Endothelial cell of umbilical vein (primary cell): ENCODE measurements at regions of chr11 and their contacts with region 1.

Region 1: DNA sequence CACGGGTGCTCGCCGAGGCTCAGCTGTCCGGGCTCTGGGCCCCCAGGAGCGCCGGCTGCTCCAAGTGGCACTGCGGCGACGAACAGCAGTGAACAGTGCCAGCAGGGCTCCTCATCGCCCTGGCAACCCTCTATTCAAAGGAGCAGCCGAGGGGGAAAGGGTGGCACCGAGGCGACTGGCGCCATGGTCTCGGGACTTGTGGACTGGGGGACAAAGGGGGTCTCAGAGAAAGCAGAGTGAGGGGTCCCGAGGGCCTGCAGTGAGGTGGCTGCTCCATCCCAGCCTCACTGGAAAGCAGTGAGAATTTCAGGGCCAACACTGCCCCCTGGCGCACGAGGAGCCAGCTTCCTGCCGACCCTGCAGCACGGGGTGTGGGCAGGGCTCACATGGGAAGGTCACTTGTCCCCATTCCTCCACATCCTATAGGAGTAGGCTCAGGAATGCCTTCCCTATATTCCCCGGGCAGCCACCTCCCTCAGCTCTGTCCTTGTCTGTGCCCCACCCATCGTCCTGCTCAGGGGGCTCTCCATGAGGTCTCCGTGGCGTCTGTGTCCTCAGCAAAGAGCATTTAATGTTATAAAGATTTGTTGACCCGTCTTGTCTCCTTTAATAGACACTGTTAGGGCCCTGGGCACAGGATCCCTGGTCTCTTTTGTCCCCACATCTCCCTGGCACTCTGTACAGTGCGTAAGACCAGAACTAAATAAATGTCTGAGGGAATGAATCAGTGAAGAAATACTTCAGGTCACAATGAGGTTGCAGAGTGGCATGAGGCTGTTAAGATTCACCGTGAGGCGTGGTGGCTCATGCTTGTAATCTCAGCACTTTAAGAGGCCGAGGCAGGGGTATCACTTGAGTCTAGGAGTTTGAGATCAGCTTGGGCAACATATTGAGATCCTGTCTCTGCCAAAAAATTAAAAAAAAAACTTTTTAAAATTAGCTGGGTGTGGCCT is 26.4 kb downstream of the LRFN4 start:
- DNase-seq: peak; percentile 50
- H3K4me3 ChIP-seq: no peak overlapping the region
- H3K27ac ChIP-seq: no peak overlapping the region
- H3K4me1 ChIP-seq: peaks cover 5% of the 10 kb centered on the region
- H3K27me3 ChIP-seq: no peaks in the 10 kb centered on the region
- CTCF ChIP-seq: peak; percentile 78 to 85
- POLR2A ChIP-seq: no peak

Region 2: GRCh38 chr11:66579017-66579606 is 304.2 kb before region 1 on chr11:
- CTCF ChIA-PET with region 1: no interaction called
- POLR2A ChIA-PET with region 1: no interaction called
- dilution Hi-C with region 1: no loop called
- intact Hi-C with region 1: loop called (anchors 2 kb)
- DNase-seq: peak; percentile 69
- H3K4me3 ChIP-seq: no peak overlapping the region
- H3K27ac ChIP-seq: no peak overlapping the region
- H3K4me1 ChIP-seq: no peaks in the 10 kb centered on the region
- H3K27me3 ChIP-seq: peaks cover 0 to 2% of the 10 kb centered on the region in 2 experiments
- CTCF ChIP-seq: peak; percentile 76 to 88
- POLR2A ChIP-seq: no peak

Region 3: DNA sequence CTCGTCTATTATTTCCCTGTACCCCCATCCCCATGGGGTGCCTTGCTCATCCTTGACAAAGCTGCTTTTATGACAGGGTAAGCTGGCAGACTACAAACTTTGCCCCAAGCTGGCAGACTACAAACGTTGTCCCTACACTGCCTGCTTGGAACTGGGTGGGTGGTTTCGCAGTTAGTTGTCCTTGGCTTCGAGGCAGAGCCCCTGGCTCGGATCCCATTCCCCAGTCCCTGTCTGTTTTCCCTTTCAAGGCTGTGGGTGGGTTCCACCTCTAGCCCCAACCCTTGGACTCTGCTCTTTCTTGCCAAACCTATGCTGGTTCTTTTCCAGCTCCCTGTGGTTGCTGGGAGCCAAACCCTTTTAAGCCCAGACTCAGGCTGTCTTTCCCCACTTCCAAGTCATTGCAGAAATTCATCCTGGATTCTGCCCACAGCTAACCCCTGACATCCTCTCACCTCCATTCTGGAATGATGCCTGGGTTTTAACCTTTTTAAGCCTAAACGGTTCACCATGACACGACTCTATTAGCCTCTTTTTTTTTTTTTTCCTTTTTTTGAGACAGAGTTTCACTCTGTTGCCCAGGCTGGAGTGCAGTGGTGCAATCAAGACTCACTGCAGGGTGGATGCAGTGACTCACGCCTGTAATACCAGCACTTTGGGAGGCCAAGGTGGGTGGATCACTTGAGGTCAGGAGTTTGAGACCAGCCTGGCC is 276.0 kb before region 1 on chr11:
- CTCF ChIA-PET with region 1: no interaction called
- POLR2A ChIA-PET with region 1: no interaction called
- dilution Hi-C with region 1: no loop called
- intact Hi-C with region 1: no loop called
- DNase-seq: no peak
- H3K4me3 ChIP-seq: no peak overlapping the region
- H3K27ac ChIP-seq: no peak overlapping the region
- H3K4me1 ChIP-seq: peaks cover 3% of the 10 kb centered on the region
- H3K27me3 ChIP-seq: no peaks in the 10 kb centered on the region
- CTCF ChIP-seq: no peak
- POLR2A ChIP-seq: no peak

Region 4: DNA sequence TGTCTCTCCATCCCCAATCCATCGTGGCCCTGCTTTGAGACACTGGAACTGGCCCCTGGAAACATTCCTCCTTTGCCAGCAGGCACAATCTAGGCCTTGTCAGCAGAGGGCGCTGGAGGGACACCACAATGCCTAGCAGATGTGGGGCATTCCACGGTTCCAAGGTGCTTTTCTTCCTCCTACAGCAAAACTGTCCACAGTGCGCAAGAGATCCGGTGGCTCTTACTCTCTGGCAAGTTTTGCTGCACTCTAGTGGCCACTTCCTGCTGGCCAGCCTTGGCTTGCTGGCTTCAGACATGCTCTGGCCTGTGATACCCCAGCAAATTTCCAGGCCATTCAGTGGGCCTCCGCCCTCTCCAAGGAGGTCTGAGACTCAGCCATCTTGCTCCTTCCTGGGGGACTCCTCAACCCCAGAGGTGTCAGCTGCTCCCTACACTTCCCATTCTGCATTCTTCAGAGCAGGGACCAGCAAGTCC is 188.5 kb before region 1 on chr11:
- CTCF ChIA-PET with region 1: interaction called, 4 read pairs
- POLR2A ChIA-PET with region 1: no interaction called
- dilution Hi-C with region 1: no loop called
- intact Hi-C with region 1: loop called (anchors 1 kb)
- DNase-seq: peak; percentile 92
- H3K4me3 ChIP-seq: no peak overlapping the region
- H3K27ac ChIP-seq: no peak overlapping the region
- H3K4me1 ChIP-seq: no peaks in the 10 kb centered on the region
- H3K27me3 ChIP-seq: no peaks in the 10 kb centered on the region
- CTCF ChIP-seq: peak; percentile 95 to 99
- POLR2A ChIP-seq: no peak

Region 5: GRCh38 chr11:66842896-66843775 is 40.2 kb before region 1 on chr11 and contains the start of gene RCE1:
- CTCF ChIA-PET with region 1: interaction called, 5 read pairs
- POLR2A ChIA-PET with region 1: no interaction called
- dilution Hi-C with region 1: no loop called
- intact Hi-C with region 1: loop called (anchors 1 kb)
- DNase-seq: peak; percentile 91
- H3K4me3 ChIP-seq: peak within 1 kb of the TSS; percentile 63 to 95 (median 74)
- H3K27ac ChIP-seq: peak within 1 kb of the TSS; percentile 97
- H3K4me1 ChIP-seq: peaks cover 27% of the 10 kb centered on the region
- H3K27me3 ChIP-seq: no peaks in the 10 kb centered on the region
- CTCF ChIP-seq: no peak
- POLR2A ChIP-seq: peak; percentile 94
- total RNA-seq, gene RCE1: 26.9 and 27.8 TPM in 2 replicates

Region 6: GRCh38 chr11:66855574-66856495 is 27.5 kb before region 1 on chr11:
- CTCF ChIA-PET with region 1: interaction called, 15 read pairs
- POLR2A ChIA-PET with region 1: no interaction called
- dilution Hi-C with region 1: no loop called
- intact Hi-C with region 1: no loop called
- DNase-seq: peak; percentile 85
- H3K4me3 ChIP-seq: peak overlapping the region; percentile 29 to 59 (median 54)
- H3K27ac ChIP-seq: peak overlapping the region; percentile 56
- H3K4me1 ChIP-seq: peaks cover 9% of the 10 kb centered on the region
- H3K27me3 ChIP-seq: no peaks in the 10 kb centered on the region
- CTCF ChIP-seq: no peak
- POLR2A ChIP-seq: peak; percentile 71